SK-N-SH (cell line): ENCODE measurements at regions of chr2 and their contacts with region 1.

Region 1: GRCh38 chr2:39913648-39914461 is 134.8 kb upstream of the THUMPD2 start:
- DNase-seq: peak; percentile 57
- H3K4me3 ChIP-seq: no peak overlapping the region; a peak in 1 of 4 replicates
- H3K27ac ChIP-seq: no peak overlapping the region
- H3K4me1 ChIP-seq: no peaks in the 10 kb centered on the region; a peak in 2 of 4 replicates
- H3K27me3 ChIP-seq: no peaks in the 10 kb centered on the region
- CTCF ChIP-seq: peak; percentile 98
- EP300 ChIP-seq: peak in 1 of 2 experiments; percentile 38; a peak in 1 of 4 replicates
- RAD21 ChIP-seq: peak; percentile 100

Region 2: DNA sequence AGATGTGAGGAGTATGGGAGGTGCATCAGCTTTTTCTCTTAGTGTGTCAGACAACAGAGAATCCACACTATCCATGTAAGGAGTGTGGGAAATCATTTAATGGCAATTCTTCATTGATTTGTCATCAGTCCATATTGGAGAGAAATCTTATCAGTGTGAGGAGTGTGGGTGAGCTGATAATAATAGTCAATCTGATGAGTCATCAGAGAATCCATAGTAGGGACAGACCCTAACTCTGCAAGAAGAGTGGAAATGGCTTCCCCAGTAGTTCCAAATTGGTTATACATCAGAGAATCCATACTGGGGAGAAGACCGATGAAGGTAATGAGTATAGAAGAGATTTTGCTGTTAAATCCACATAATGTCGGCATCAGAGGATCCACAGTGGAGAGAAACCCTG is 15.7 kb after region 1 on chr2:
- CTCF ChIA-PET with region 1: interaction called, 27 read pairs
- POLR2A ChIA-PET with region 1: no interaction called
- DNase-seq: no peak
- H3K4me3 ChIP-seq: no peak overlapping the region
- H3K27ac ChIP-seq: no peak overlapping the region
- H3K4me1 ChIP-seq: no peaks in the 10 kb centered on the region; a peak in 1 of 4 replicates
- H3K27me3 ChIP-seq: no peaks in the 10 kb centered on the region
- CTCF ChIP-seq: no peak
- EP300 ChIP-seq: no peak
- RAD21 ChIP-seq: no peak

Region 3: GRCh38 chr2:40448468-40449079 is 534.7 kb after region 1 on chr2:
- CTCF ChIA-PET with region 1: interaction called, 11 read pairs
- POLR2A ChIA-PET with region 1: no interaction called
- DNase-seq: peak; percentile 60
- H3K4me3 ChIP-seq: peak overlapping the region in 1 of 2 experiments; percentile 9; a peak in 1 of 4 replicates
- H3K27ac ChIP-seq: peak overlapping the region in 1 of 2 experiments; percentile 88; a peak in 1 of 4 replicates
- H3K4me1 ChIP-seq: peaks cover 0 to 17% of the 10 kb centered on the region in 2 experiments; a peak in 2 of 4 replicates
- H3K27me3 ChIP-seq: no peaks in the 10 kb centered on the region
- CTCF ChIP-seq: peak; percentile 80
- EP300 ChIP-seq: no peak
- RAD21 ChIP-seq: peak; percentile 76

Region 4: DNA sequence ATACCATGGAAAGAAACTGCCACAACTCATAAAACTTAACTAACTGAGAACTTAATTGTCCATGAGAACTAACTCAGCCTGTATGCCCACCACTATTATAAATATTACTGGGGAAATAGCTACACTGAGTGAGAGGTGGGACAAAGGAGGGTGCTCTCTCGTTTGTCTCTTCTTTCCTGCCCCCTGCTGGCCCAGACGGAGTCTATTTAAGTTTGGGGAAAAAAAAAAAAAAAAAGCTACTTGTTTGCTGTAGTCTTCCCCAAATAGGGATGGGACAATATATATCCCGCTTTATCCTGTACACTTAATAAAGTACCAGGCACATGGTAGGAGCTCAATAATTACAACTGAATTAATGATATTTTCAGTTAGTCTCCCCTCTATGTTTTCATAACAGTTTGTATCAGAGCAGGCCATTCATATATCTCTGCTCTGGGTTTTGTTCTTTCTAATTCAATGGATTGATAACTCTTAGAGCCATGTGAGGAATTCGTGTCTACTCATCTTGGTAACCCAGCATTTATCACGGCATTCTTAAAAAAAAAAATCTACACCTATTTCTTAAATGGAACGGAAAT is 1486.3 kb after region 1 on chr2:
- CTCF ChIA-PET with region 1: interaction called, 19 read pairs
- POLR2A ChIA-PET with region 1: no interaction called
- DNase-seq: peak; percentile 36
- H3K4me3 ChIP-seq: no peak overlapping the region
- H3K27ac ChIP-seq: no peak overlapping the region
- H3K4me1 ChIP-seq: no peaks in the 10 kb centered on the region
- H3K27me3 ChIP-seq: no peaks in the 10 kb centered on the region
- CTCF ChIP-seq: peak; percentile 51
- EP300 ChIP-seq: no peak
- RAD21 ChIP-seq: peak; percentile 80

Region 5: DNA sequence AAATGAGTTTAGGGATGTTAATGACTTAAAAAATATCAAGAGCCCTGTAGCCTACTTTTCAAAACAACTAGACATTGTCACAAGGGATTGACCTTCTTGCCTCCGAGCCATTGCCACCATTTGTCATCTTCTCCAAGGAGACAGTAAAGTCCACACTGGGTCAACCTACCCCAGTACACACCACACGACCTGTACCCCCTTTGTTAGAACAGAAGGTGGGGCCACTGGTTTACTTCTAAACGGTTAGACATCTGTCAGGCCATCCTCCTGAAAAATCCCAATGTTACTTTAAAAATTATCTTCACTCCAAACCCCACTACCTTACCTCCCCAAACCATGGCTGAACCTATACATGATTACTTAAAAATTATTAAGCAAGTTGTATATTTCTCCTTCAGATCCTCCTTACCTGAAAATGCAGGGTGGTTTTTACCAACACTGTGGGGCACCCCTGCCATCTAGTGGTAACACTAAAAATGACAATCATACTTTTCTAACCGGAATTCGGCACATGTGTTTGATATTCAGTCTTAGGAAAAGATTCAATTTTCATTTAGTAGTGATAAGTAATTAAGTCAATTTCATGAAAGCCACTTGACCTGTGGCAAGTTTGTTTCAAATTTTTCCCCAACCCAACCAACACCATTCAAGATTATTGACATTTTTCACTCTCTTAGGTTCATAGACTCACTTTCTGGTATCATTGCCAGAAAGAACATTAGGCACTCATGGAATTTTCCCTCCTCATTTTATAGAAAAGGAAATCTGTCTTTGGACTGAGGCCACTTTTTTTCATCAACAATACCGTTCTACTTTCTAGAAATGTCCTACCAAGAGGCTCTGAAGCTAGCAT is 1868.7 kb after region 1 on chr2:
- CTCF ChIA-PET with region 1: interaction called, 12 read pairs
- POLR2A ChIA-PET with region 1: no interaction called
- DNase-seq: peak; percentile 55
- H3K4me3 ChIP-seq: peak overlapping the region in 1 of 2 experiments; percentile 32; a peak in 1 of 4 replicates
- H3K27ac ChIP-seq: no peak overlapping the region
- H3K4me1 ChIP-seq: no peaks in the 10 kb centered on the region; a peak in 2 of 4 replicates
- H3K27me3 ChIP-seq: no peaks in the 10 kb centered on the region
- CTCF ChIP-seq: peak; percentile 98
- EP300 ChIP-seq: no peak
- RAD21 ChIP-seq: peak; percentile 99